ENCODE measurements at regions of chr3 and their contacts with region 1.

Region 1: GRCh38 chr3:151282921-151283320 is 4.6 kb upstream of the P2RY14 start:
- DNase-seq: peak; percentile 73
- H3K4me3 Mint-ChIP-seq: no peak overlapping the region
- H3K27ac Mint-ChIP-seq: no peak overlapping the region
- H3K4me1 Mint-ChIP-seq: no peaks in the 10 kb centered on the region
- H3K27me3 Mint-ChIP-seq: no peaks in the 10 kb centered on the region
- CTCF ChIP-seq: peak; percentile 67

Region 2: GRCh38 chr3:150861851-150862250 is 421.1 kb before region 1 on chr3:
- CTCF ChIA-PET with region 1: no interaction called
- POLR2A ChIA-PET with region 1: no interaction called
- intact Hi-C with region 1: no loop called
- DNase-seq: no peak
- H3K4me3 Mint-ChIP-seq: no peak overlapping the region
- H3K27ac Mint-ChIP-seq: no peak overlapping the region
- H3K4me1 Mint-ChIP-seq: peaks cover 6% of the 10 kb centered on the region
- H3K27me3 Mint-ChIP-seq: no peaks in the 10 kb centered on the region
- CTCF ChIP-seq: no peak

Region 3: GRCh38 chr3:151268267-151269235 is 14.4 kb before region 1 on chr3:
- CTCF ChIA-PET with region 1: interaction called, 10 read pairs
- POLR2A ChIA-PET with region 1: no interaction called
- intact Hi-C with region 1: no loop called
- DNase-seq: no peak
- H3K4me3 Mint-ChIP-seq: no peak overlapping the region
- H3K27ac Mint-ChIP-seq: no peak overlapping the region
- H3K4me1 Mint-ChIP-seq: no peaks in the 10 kb centered on the region
- H3K27me3 Mint-ChIP-seq: no peaks in the 10 kb centered on the region
- CTCF ChIP-seq: no peak

Region 4: DNA sequence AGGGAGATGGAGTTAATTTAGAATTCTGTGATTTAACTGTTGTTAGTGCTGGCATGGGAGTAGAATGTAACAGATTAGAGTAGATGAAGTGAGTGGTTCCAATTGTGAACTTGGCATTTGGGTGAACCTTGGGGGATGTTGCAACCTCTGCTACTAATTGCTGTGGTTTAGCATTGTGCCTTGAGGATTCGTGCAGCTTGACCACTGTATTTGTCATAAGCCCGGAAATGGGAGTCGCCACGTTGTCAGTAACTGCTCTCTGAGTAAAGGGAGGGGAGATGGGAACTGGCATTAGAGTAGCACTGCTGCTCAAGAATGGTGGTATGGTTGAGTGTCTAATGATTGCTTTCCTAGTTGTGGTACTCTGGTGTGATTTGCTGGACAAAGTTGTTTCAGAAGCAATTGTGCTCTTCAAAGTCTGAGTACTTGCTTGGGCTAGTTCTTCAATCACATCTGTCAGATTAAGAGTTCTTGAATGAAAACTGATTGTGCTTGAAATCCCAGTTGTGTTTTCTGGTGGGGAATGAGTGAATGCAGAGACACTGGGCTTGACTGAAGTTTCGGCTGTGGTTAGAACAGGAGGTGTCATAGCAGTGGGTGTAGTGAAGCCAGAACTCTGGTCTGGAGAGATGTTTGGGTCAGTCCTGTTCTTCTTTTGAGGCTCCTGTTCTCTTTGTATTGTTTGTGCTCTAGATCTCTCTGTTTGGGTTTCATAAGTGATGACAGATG is 162.5 kb after region 1 on chr3:
- CTCF ChIA-PET with region 1: no interaction called
- POLR2A ChIA-PET with region 1: no interaction called
- intact Hi-C with region 1: no loop called
- DNase-seq: peak; percentile 86
- H3K4me3 Mint-ChIP-seq: no peak overlapping the region
- H3K27ac Mint-ChIP-seq: no peak overlapping the region
- H3K4me1 Mint-ChIP-seq: peaks cover 12% of the 10 kb centered on the region
- H3K27me3 Mint-ChIP-seq: peaks cover 20% of the 10 kb centered on the region
- CTCF ChIP-seq: no peak

Measured in MCF 10A (cell line).